T-cell (primary cell): ENCODE measurements at regions of chr3 and their contacts with region 1.

Region 1: GRCh38 chr3:122101646-122102045 is 46.5 kb downstream of the CD86 start:
- DNase-seq: peak in 6 of 35 experiments; percentile 4 to 78 (median 19)
- ATAC-seq: peak in 2 of 4 experiments; percentile 71 to 72
- H3K4me3 ChIP-seq: no peak overlapping the region
- H3K4me3 Mint-ChIP-seq: no peak overlapping the region
- H3K27ac ChIP-seq: no peak overlapping the region
- H3K27ac Mint-ChIP-seq: no peak overlapping the region
- H3K4me1 ChIP-seq: peaks cover 6 to 8% of the 10 kb centered on the region in 2 experiments
- H3K4me1 Mint-ChIP-seq: peaks cover 8 to 18% (median 12%) of the 10 kb centered on the region in 3 donors
- H3K27me3 ChIP-seq: peaks cover 0 to 2% of the 10 kb centered on the region in 2 experiments
- H3K27me3 Mint-ChIP-seq: no peaks in the 10 kb centered on the region

Region 2: DNA sequence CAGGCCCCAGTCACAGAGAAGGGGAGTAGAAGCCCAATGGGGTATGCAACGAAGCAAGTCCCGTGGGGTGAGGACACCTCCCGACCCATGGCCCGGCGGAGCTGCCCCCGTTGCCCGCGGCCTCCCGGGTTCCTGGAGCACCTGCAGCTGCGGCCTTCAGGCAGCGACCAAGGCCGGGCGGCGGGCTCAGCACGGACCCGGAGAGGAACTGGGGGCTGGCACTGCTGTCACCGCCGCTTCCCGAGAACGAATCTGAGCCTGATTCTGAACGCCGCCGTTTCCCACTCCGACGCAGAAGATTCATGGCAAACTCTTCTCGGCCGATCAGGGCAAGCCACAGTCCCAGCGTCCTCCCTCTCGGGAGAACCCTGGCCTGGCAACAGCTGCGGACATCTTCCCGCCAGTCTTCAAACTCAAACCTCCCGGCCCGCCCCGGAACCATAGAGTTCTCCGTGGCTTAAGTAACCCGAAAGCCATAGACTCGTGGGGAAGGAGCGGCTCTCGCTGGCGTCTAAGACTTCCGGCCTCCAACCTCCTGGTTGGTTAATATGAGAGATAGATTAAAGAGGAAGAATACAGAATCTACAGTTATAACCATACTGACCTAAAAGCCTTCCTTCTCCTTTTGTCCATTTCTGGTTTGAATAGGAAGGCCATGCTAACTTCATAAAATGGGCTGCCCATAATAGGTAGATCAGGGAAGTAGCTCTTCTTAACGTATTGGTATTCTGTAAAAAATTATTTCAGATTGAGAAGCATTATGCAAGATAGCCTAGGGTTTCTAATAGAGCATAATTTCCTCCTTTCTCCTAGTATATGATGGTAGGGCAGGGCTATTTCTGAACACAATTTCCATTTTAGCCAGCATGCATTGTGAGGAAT is 555.8 kb before region 1 on chr3 and contains the start of gene POLQ:
- CTCF ChIA-PET with region 1: interaction called, 7 to 15 read pairs
- POLR2A ChIA-PET with region 1: no interaction called
- DNase-seq: peak; percentile 65 to 91 (median 86)
- ATAC-seq: peak; percentile 98 to 99 (median 99)
- H3K4me3 ChIP-seq: peak within 1 kb of the TSS; percentile 63 to 95
- H3K4me3 Mint-ChIP-seq: peak within 1 kb of the TSS; percentile 88 to 93 (median 89)
- H3K27ac ChIP-seq: peak within 1 kb of the TSS; percentile 67
- H3K27ac Mint-ChIP-seq: peak within 1 kb of the TSS; percentile 91 to 93
- H3K4me1 ChIP-seq: peaks cover 6 to 9% of the 10 kb centered on the region in 2 experiments
- H3K4me1 Mint-ChIP-seq: peaks cover 10 to 21% (median 10%) of the 10 kb centered on the region in 3 donors
- H3K27me3 ChIP-seq: no peaks in the 10 kb centered on the region
- H3K27me3 Mint-ChIP-seq: no peaks in the 10 kb centered on the region
- total RNA-seq, gene POLQ: 0.23 to 1.1 (median 0.47) TPM

Region 3: GRCh38 chr3:122183521-122183892 is 81.9 kb after region 1 on chr3 and contains the start of gene CASR:
- CTCF ChIA-PET with region 1: no interaction called
- POLR2A ChIA-PET with region 1: no interaction called
- DNase-seq: no peak
- ATAC-seq: no peak
- H3K4me3 ChIP-seq: no peak within 1 kb of the TSS
- H3K4me3 Mint-ChIP-seq: peak within 1 kb of the TSS; percentile 48 to 61 (median 53)
- H3K27ac ChIP-seq: no peak within 1 kb of the TSS
- H3K27ac Mint-ChIP-seq: peak within 1 kb of the TSS in 1 of 2 donors; percentile 70
- H3K4me1 ChIP-seq: no peaks in the 10 kb centered on the region
- H3K4me1 Mint-ChIP-seq: peaks cover 6 to 10% (median 7%) of the 10 kb centered on the region in 3 donors
- H3K27me3 ChIP-seq: peaks cover 10 to 16% of the 10 kb centered on the region in 2 experiments
- H3K27me3 Mint-ChIP-seq: peaks cover 59 to 61% of the 10 kb centered on the region in 2 donors
- total RNA-seq, gene CASR: 0.03 to 0.21 TPM in 2 of 5 donors, not detected in the others

Region 4: GRCh38 chr3:122258757-122259371 is 157.2 kb after region 1 on chr3:
- CTCF ChIA-PET with region 1: interaction called in 1 of 2 experiments, 12 read pairs
- POLR2A ChIA-PET with region 1: no interaction called
- DNase-seq: peak in 17 of 35 experiments; percentile 5 to 53 (median 11)
- ATAC-seq: no peak
- H3K4me3 ChIP-seq: no peak overlapping the region
- H3K4me3 Mint-ChIP-seq: no peak overlapping the region
- H3K27ac ChIP-seq: no peak overlapping the region
- H3K27ac Mint-ChIP-seq: no peak overlapping the region
- H3K4me1 ChIP-seq: no peaks in the 10 kb centered on the region
- H3K4me1 Mint-ChIP-seq: peaks cover 0 to 5% (median 3%) of the 10 kb centered on the region in 3 donors
- H3K27me3 ChIP-seq: peaks cover 0 to 10% of the 10 kb centered on the region in 2 experiments
- H3K27me3 Mint-ChIP-seq: peaks cover 7 to 22% of the 10 kb centered on the region in 2 donors

Region 5: GRCh38 chr3:122299872-122300460 is 198.3 kb after region 1 on chr3:
- CTCF ChIA-PET with region 1: interaction called, 6 to 45 read pairs
- POLR2A ChIA-PET with region 1: interaction called in 1 of 2 experiments, 3 read pairs
- DNase-seq: peak in 24 of 35 experiments; percentile 7 to 74 (median 21)
- ATAC-seq: peak in 1 of 4 experiments; percentile 40
- H3K4me3 ChIP-seq: no peak overlapping the region
- H3K4me3 Mint-ChIP-seq: no peak overlapping the region
- H3K27ac ChIP-seq: no peak overlapping the region
- H3K27ac Mint-ChIP-seq: no peak overlapping the region
- H3K4me1 ChIP-seq: peaks cover 0 to 7% of the 10 kb centered on the region in 2 experiments
- H3K4me1 Mint-ChIP-seq: peaks cover 0 to 17% (median 12%) of the 10 kb centered on the region in 3 donors
- H3K27me3 ChIP-seq: no peaks in the 10 kb centered on the region
- H3K27me3 Mint-ChIP-seq: peaks cover 0 to 4% of the 10 kb centered on the region in 2 donors